Dorsolateral prefrontal cortex (tissue), 120 donors: ENCODE measurements at regions of chr21 and their contacts with region 1.

Region 1: DNA sequence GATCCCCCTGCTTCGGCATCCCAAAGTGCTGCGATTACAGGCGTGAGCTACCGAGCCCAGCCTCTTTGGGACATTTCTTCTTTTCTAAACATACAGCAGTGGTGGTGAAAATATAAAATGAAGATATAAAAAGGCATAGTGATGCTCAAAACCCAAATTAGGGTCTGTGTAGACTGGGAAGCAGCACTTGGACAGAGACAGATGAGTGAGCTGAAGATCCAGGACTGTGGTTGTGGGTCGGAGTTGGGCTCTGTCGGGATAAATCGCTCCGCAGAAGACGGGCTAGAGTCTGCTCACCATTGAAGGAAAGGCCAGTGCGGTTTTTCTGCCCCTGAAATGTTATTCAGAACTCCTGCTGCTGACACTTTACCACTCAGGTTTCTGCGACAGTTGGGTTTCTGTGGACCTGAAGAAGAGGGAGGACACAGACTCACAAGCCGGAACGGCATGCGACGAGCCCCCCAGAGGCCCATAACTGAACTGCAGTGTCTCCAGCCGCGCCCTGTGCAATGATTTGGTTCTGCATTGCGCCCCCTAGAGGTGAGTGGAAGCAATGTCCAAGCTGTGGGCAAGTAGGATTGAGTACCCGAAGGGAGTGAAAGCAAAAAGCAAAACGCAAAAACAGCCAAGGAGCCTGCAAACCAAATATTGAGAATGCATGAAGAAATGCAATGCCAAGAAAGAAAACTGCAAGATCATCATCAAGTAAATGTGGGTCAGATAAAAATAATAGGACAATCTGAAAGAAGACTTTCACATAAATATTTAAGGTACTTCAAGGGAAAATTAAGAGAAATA is 66.6 kb downstream of the GABPA start:
- DNase-seq: peak; percentile 18 to 79 (median 66)
- H3K4me3 ChIP-seq: peak overlapping the region in 12 of 59 donors; percentile 3 to 33 (median 16)
- H3K27ac ChIP-seq: no peak overlapping the region
- H3K27me3 ChIP-seq: no peaks in the 10 kb centered on the region
- CTCF ChIP-seq: peak; percentile 55 to 92 (median 82)

Region 2: DNA sequence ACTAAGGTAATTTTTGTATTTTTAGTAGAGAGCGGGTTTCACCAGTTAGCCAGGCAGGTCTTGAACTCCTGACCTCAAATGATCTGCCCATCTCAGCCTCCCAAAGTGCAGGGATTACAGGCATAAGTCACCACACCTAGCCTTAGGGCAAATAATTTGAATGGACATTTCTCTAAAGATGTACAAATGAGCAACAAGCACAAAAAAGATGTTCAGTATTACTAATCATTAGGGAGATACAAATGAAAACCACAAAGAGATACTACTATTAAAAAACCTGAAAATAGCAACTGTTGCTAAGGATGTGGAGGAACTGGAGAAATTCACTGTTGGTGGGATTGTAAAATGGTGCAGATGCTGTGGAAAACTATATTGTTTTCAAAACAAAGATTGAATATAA is 12.5 kb after region 1 on chr21:
- intact Hi-C with region 1: no loop called
- DNase-seq: no peak
- H3K4me3 ChIP-seq: no peak overlapping the region
- H3K27ac ChIP-seq: no peak overlapping the region
- H3K27me3 ChIP-seq: no peaks in the 10 kb centered on the region
- CTCF ChIP-seq: no peak

Region 3: DNA sequence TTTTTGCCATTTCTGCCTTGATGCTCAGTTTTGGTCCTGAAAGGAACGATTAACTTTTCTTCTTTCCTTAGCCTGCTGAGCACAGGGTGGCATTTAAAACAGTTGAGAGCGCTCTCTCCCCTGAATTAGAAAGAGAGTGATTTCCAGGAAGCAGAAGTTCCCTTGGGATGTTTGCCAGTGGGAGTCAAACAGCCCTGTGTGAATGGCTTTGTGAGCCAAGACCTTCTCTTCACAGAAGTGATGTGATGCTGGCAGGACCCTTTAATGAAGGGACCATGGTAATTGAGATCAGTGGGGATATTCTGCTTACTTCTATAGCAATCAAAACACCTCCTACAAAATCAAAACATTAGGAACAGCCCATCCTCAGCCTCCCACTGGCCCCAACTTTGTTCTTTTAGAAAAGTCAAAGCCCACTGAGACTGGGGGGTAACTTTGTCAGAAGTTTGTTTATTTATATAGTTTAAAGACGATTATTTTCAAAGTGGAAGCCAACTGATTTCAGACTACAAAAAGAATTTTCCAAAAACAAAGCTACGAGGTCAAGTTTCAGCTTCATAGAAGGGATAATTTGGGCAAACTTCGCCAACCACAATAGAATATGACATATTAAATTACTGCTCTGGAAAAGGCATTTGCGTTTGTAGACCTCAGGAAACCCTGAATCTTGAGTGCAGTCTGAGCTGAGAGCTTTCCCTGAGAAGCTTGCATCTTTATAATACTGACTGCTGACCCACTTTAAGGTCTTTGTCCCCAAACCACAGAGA is 56.1 kb after region 1 on chr21:
- intact Hi-C with region 1: loop called (anchors 5 to 10 kb)
- DNase-seq: no peak
- H3K4me3 ChIP-seq: peak overlapping the region in 3 of 59 donors; percentile 3 to 16 (median 6)
- H3K27ac ChIP-seq: peak overlapping the region in 1 of 59 donors; percentile 29
- H3K27me3 ChIP-seq: no peaks in the 10 kb centered on the region
- CTCF ChIP-seq: peak in 4 of 56 donors; percentile 15 to 26 (median 18)

Region 4: DNA sequence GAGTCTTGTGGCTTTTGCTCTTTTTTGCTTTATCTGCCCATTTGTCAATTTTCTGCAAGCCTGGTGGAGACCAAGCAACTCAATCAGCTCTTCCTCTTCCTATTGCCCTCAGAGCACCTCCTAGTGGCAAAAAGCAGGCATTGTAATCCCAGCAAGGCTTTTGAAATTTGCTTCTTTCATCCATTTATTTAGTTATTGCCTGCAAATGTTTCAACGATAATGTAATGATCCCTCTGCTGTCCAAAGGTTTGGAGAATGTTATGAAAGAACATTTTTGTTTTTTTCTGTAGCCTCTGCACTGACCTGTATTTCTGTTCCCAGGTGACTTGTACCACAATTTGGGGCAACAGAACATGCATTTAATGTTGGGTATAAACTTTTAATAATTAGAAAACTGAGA is 61.2 kb after region 1 on chr21:
- intact Hi-C with region 1: loop called (anchors 5 to 10 kb)
- DNase-seq: no peak
- H3K4me3 ChIP-seq: no peak overlapping the region
- H3K27ac ChIP-seq: no peak overlapping the region
- H3K27me3 ChIP-seq: no peaks in the 10 kb centered on the region
- CTCF ChIP-seq: peak in 55 of 56 donors; percentile 30 to 66 (median 55)

Region 5: DNA sequence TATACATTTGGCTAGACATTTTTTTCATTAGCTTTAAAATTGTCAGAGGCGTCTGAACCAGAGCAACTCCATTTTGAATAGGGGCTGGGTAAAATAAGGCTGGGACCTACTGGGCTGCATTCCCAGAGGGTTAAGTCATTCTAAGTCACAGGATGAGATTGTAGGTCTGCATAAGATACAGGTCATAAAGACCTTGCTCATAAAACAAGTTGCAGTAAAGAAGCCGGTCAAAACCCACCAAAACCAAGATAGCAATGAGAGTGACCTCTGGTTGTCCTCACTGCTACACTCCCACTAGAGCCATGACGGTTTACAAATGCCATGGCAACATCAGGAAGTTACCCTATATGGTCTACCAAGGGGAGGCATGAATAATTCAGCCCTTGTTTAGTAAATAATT is 76.9 kb after region 1 on chr21:
- intact Hi-C with region 1: no loop called
- DNase-seq: no peak
- H3K4me3 ChIP-seq: no peak overlapping the region
- H3K27ac ChIP-seq: no peak overlapping the region
- H3K27me3 ChIP-seq: no peaks in the 10 kb centered on the region
- CTCF ChIP-seq: no peak